ENCODE measurements at regions of chr7 and their contacts with region 1.

Region 1: GRCh38 chr7:134741907-134742635 is 37.4 kb upstream of the CALD1 start:
- DNase-seq: peak in 3 of 5 donors; percentile 23 to 56 (median 35)
- H3K4me3 ChIP-seq: no peak overlapping the region
- H3K27ac ChIP-seq: peak overlapping the region; percentile 16 to 85
- H3K4me1 ChIP-seq: peaks cover 16% of the 10 kb centered on the region
- H3K27me3 ChIP-seq: no peaks in the 10 kb centered on the region
- CTCF ChIP-seq: no peak
- EP300 ChIP-seq: no peak
- POLR2A ChIP-seq: no peak

Region 2: DNA sequence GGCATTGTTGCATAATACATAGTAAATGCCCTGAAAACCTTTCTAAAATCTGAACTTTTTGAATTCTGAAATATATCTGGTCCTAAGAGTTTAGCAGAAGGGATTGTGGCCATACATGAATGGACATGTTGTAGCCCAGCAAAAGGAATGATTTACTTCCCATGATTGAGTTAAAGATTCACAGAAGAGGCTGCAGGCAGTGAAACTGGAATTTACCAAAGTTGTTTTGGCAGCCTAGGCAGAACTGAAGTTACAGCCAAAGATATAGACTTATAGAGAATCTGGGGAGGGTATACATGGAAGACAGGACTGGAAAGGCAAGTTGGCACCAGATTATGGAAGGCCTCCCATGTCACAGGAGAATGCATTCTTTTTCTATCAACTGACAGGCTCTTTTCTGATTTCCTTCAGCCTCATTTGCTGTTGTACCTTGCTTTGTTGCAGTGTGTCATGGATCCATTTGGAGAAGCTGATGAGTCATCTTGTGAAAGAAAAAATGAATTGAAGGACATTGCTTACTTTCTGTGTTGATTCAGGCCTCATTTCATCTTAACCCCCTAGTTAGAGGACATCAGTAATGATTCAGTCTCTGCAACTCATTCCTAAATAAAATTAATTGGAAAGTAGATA is 971.1 kb before region 1 on chr7:
- intact Hi-C with region 1: no loop called
- DNase-seq: no peak
- H3K4me3 ChIP-seq: no peak overlapping the region
- H3K27ac ChIP-seq: no peak overlapping the region
- H3K4me1 ChIP-seq: no peaks in the 10 kb centered on the region
- H3K27me3 ChIP-seq: no peaks in the 10 kb centered on the region
- CTCF ChIP-seq: no peak
- EP300 ChIP-seq: no peak
- POLR2A ChIP-seq: no peak

Region 3: DNA sequence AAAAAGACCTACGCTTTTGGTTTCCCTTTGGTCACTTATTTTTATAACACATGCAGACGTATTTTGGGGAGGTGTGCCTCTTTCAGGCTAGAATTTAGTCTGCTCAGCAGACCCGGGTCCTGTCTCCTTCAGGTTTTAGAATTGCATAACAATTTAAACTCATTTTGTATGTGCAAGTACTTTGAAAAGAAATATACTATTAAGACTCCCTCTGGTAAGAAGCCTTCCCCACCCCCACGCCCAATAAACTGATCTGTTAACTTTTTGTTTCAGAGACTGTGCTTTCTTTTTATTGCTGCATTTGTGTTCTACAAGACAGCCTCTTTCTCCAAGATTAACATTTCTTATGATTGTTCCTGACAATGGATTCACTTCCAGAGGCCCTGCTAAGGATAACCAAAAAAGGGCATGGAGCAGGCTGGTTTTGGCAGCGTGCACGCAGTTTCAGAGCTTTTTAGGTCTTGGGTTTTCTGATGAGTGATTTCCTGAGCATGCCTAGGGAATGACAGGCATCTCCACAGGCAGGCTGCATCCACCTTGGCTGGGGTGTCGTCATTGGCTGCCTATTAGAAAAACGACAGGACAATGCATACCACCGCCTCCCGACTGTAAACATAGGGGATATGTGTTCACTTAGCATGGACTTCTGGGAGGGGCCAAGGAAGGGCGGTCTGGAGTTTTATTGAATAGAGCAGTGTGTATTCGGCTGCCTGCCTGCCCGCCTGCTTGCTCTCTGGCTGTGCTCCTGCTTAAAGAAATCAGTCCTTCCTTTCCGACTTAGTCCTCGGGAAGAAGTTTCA is 37.1 kb after region 1 on chr7 and contains the start of gene CALD1:
- intact Hi-C with region 1: no loop called
- DNase-seq: peak; percentile 69 to 76 (median 75)
- H3K4me3 ChIP-seq: peak within 1 kb of the TSS; percentile 71
- H3K27ac ChIP-seq: peak within 1 kb of the TSS; percentile 51 to 82
- H3K4me1 ChIP-seq: peaks cover 13% of the 10 kb centered on the region
- H3K27me3 ChIP-seq: no peaks in the 10 kb centered on the region
- CTCF ChIP-seq: no peak
- EP300 ChIP-seq: no peak
- POLR2A ChIP-seq: peak; percentile 36
- total RNA-seq, gene CALD1: 306 to 697 (median 463) TPM

Region 4: DNA sequence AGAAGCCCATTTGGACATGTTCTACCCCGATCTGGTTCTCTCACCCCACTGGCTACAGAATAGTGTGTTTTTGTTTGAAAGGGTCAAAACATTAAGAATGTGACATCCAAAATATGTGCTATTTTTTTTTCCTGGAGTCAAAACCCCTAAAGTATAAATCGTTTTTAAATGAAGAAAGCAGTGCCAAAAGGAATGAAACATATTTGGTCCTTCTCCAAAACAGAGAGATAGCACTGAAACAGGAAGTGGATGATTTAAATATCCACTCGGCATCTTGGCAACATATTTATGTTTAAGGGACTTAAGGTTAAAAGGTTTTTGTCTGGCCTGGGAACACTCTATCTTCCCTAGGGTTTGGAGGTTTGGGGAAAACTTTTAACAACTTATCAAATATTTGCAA is 69.7 kb after region 1 on chr7:
- intact Hi-C with region 1: loop called in 1 of 4 experiments (anchors 10 kb)
- DNase-seq: no peak
- H3K4me3 ChIP-seq: no peak overlapping the region
- H3K27ac ChIP-seq: peak overlapping the region in 1 of 2 donors; percentile 65
- H3K4me1 ChIP-seq: peaks cover 42% of the 10 kb centered on the region
- H3K27me3 ChIP-seq: no peaks in the 10 kb centered on the region
- CTCF ChIP-seq: no peak
- EP300 ChIP-seq: no peak
- POLR2A ChIP-seq: no peak